Heart left ventricle (tissue), 16 donors: ENCODE measurements at regions of chr7 and their contacts with region 1.

Region 1: GRCh38 chr7:38107486-38107893 is 70.6 kb upstream of the STARD3NL start:
- DNase-seq: peak in 4 of 5 donors; percentile 28 to 56 (median 34)
- ATAC-seq: peak in 3 of 4 donors; percentile 71 to 82 (median 72)
- H3K4me3 ChIP-seq: no peak overlapping the region
- H3K27ac ChIP-seq: no peak overlapping the region
- H3K4me1 ChIP-seq: no peaks in the 10 kb centered on the region
- H3K27me3 ChIP-seq: no peaks in the 10 kb centered on the region
- CTCF ChIP-seq: peak; percentile 54 to 88 (median 76)
- POLR2A ChIP-seq: no peak

Region 2: DNA sequence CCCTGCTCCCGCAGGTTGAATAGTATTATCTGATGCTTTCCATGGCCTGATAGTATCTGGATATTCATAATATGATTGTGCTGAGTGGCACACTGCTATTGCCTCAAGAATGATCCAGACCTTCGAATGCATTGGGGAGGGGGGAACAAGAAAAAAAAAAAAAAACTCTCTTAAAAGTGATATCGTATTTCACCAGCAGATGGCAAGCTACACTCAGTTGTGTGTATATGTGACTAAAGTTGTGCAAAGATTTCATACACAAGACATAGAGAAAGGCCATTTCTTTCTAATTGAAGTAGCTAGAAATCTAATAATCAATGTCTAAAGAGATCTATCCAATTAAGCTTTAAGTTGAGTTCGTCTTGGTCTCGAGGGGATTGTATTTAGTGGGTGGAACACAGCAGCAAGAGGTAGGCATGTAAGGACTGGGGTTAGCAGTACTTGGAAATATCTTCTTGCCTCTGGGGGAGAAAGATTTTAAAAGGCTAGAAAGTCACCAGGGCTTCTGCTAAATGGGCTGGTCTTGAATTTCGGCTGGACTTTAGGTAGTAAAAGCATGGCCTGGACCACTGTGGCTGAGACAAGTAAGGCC is 206.2 kb before region 1 on chr7:
- intact Hi-C with region 1: loop called in 8 of 10 experiments (anchors 2 to 5 kb)
- DNase-seq: no peak
- ATAC-seq: peak in 3 of 4 donors; percentile 42 to 69 (median 52)
- H3K4me3 ChIP-seq: no peak overlapping the region
- H3K27ac ChIP-seq: no peak overlapping the region
- H3K4me1 ChIP-seq: peaks cover 0 to 17% (median 3%) of the 10 kb centered on the region in 12 donors
- H3K27me3 ChIP-seq: no peaks in the 10 kb centered on the region
- CTCF ChIP-seq: peak; percentile 32 to 69 (median 50)
- POLR2A ChIP-seq: no peak

Region 3: GRCh38 chr7:37916673-37917660 is 190.5 kb before region 1 on chr7 and contains the start of gene SFRP4:
- intact Hi-C with region 1: loop called in 6 of 10 experiments (anchors 2 to 10 kb)
- DNase-seq: peak; percentile 67 to 76 (median 69)
- ATAC-seq: peak; percentile 50 to 73 (median 60)
- H3K4me3 ChIP-seq: peak within 1 kb of the TSS; percentile 33 to 68 (median 56)
- H3K27ac ChIP-seq: peak within 1 kb of the TSS in 8 of 12 donors; percentile 42 to 88 (median 74)
- H3K4me1 ChIP-seq: peaks cover 0 to 32% (median 13%) of the 10 kb centered on the region in 12 donors
- H3K27me3 ChIP-seq: peaks cover 0 to 21% (median 5%) of the 10 kb centered on the region in 9 donors
- CTCF ChIP-seq: peak; percentile 52 to 80 (median 66)
- POLR2A ChIP-seq: no peak
- total RNA-seq, gene SFRP4: 0.35 to 21.3 (median 2.0) TPM

Region 4: DNA sequence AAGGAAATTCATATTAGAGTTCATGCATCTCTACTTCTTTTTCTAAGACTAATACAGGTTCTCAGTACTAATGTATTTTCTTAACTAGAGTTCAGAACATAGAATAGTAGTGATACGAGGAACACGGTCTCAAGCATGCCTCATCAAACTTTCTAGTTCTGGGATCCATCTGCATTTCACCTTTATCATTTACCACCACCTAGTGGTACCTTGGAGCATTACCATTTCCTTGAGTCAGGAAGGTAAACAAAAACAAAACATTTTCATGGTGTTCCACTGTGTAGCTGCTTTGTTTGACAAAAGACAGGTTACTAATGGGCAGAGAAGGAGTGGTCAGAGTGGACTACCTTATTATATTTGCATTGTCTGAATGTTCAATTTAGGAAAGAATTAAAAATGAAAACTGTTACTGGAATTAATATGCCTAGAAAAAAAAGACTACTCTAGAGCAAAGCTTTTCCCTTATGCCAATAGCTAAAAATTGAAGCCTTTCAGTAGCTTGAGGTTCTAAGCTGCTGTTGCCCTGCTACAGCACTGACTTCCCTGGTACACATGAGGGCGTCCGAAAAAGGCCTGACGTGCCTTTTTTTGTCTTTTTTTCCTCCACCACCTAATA is 115.1 kb after region 1 on chr7:
- intact Hi-C with region 1: loop called (anchors 1 to 2 kb)
- DNase-seq: no peak
- ATAC-seq: peak; percentile 68 to 81 (median 70)
- H3K4me3 ChIP-seq: no peak overlapping the region
- H3K27ac ChIP-seq: peak overlapping the region in 1 of 12 donors; percentile 11
- H3K4me1 ChIP-seq: peaks cover 0 to 10% (median 0%) of the 10 kb centered on the region in 12 donors
- H3K27me3 ChIP-seq: no peaks in the 10 kb centered on the region
- CTCF ChIP-seq: peak; percentile 83 to 95 (median 89)
- POLR2A ChIP-seq: no peak

Region 5: GRCh38 chr7:38311329-38311937 is 203.9 kb after region 1 on chr7:
- intact Hi-C with region 1: loop called in 8 of 10 experiments (anchors 2 to 10 kb)
- DNase-seq: peak in 4 of 5 donors; percentile 38 to 82 (median 53)
- ATAC-seq: peak in 3 of 4 donors; percentile 71 to 90 (median 85)
- H3K4me3 ChIP-seq: peak overlapping the region; percentile 31 to 65 (median 54)
- H3K27ac ChIP-seq: peak overlapping the region in 4 of 12 donors; percentile 14 to 82 (median 34)
- H3K4me1 ChIP-seq: peaks cover 0 to 48% (median 9%) of the 10 kb centered on the region in 12 donors
- H3K27me3 ChIP-seq: no peaks in the 10 kb centered on the region
- CTCF ChIP-seq: no peak
- POLR2A ChIP-seq: no peak

Region 6: DNA sequence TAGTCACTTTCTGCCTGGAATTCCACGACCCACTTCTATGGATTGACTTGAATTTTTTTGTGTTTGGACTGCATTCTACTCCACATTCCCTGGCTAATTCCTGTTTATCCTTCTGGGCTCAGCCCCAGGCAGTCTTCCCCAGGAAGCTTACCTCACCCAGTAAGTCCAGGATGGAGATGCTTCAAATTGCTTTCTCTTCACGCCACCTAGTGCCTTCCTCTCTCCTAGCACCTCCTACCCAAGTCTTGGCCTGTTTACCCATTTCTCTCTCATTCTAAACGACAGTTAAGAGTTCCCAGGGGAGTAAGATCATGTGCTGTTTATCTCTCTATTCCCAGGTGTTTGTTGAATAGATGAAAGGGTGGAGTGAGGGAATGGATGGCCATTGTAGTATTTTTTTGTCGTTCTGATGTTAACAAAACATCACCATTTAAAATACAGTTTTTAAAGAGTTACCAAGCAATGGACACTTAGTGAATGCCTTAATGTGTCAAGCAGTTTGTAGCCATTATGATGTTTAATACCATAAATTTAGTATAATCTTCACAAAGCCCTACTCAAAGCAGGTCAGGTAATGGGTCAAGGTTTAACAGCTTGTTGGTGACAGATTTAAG is 211.4 kb after region 1 on chr7:
- intact Hi-C with region 1: loop called (anchors 2 to 10 kb)
- DNase-seq: peak in 1 of 5 donors; percentile 34
- ATAC-seq: peak; percentile 41 to 92 (median 81)
- H3K4me3 ChIP-seq: no peak overlapping the region
- H3K27ac ChIP-seq: peak overlapping the region in 2 of 12 donors; percentile 9 to 37
- H3K4me1 ChIP-seq: peaks cover 0 to 21% (median 0%) of the 10 kb centered on the region in 12 donors
- H3K27me3 ChIP-seq: no peaks in the 10 kb centered on the region
- CTCF ChIP-seq: peak; percentile 23 to 59 (median 51)
- POLR2A ChIP-seq: no peak

Region 7: DNA sequence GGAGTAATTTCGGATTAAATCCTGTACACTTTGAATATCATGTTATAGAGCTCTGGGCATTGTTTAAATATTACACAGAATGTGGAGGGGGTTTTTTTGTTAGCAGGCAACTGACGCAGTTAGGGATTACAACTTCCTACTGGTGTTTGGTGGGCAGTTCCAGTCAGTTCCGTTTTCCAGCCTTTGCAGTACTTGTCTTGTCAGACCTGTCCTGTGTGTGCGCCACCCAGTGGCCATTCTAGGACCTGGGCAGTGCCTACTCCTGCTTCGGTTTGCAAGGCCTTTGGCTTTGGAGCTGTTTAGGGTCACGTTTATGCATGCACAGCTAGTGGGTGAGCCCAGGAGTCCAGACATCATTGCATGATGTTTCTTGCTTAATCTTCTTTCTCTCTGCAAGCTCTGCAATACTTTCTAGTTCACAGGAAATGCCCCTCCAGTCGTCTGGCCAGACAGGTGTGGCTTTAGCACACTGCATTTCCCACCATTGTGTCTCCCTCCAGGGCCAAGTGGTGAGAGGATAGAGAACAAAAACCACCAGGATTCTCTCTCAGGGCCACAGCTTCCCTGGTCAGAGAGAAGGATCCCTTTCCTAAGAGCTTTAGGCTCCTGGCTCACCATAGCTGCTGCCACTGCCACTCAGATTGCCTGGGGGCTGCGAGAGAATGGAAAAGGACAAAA is 262.5 kb after region 1 on chr7:
- intact Hi-C with region 1: loop called in 8 of 10 experiments (anchors 5 to 10 kb)
- DNase-seq: peak; percentile 84 to 94 (median 90)
- ATAC-seq: peak; percentile 79 to 96 (median 96)
- H3K4me3 ChIP-seq: peak overlapping the region in 6 of 12 donors; percentile 1 to 27 (median 14)
- H3K27ac ChIP-seq: peak overlapping the region in 5 of 12 donors; percentile 15 to 73 (median 54)
- H3K4me1 ChIP-seq: peaks cover 0 to 35% (median 0%) of the 10 kb centered on the region in 12 donors
- H3K27me3 ChIP-seq: no peaks in the 10 kb centered on the region
- CTCF ChIP-seq: peak; percentile 69 to 86 (median 78)
- POLR2A ChIP-seq: no peak